ENCODE measurements at regions of chr12 and their contacts with region 1.

Region 1: DNA sequence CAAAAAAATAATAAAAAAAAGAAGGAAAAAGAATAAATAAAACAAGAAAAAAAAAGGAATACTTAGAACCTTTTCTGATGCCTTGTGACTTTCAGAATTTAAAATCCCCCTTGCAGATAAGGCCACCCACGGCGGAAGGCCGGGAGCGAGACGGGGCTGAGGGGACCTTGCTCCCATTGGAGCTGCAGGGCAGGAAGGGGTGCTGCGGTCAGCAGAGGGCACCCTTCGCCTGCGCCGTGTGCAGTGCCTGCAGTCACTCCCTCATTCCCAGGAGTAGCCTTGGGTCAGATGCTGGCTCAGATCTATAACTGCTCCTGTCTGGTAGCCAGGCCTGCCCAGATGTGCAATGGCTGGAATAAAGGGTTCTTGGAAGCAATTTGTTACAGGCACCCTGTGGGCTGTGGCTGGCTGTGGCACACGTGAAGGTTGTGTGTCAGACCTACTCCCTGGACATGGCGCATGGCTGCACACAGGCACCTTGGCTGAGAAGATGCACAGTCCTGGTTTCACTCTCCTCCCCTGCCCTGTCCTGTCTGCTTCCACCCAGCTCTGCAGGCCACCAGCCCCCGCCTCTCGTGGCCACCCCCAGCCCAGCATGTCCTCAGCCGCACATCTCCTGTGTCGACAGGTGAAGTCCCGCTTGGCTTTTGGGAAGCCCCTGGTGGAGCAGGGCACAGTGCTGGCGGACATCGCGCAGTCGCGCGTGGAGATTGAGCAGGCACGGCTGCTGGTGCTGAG is 13.4 kb upstream of the ALDH2 start:
- DNase-seq: peak in 1 of 2 donors; percentile 61
- ATAC-seq: peak; percentile 65 to 76
- H3K4me3 ChIP-seq: no peak overlapping the region
- H3K27ac ChIP-seq: peak overlapping the region in 3 of 4 donors; percentile 14 to 60 (median 28)
- H3K4me1 ChIP-seq: peaks cover 24 to 27% of the 10 kb centered on the region in 2 donors
- H3K27me3 ChIP-seq: no peaks in the 10 kb centered on the region
- CTCF ChIP-seq: peak; percentile 69 to 90 (median 80)
- POLR2A ChIP-seq: no peak

Region 2: GRCh38 chr12:111766608-111767361 is 13.5 kb after region 1 on chr12 and contains the start of gene ALDH2:
- in situ Hi-C with region 1: no loop called
- intact Hi-C with region 1: no loop called
- DNase-seq: peak; percentile 45 to 55
- ATAC-seq: peak; percentile 82 to 84
- H3K4me3 ChIP-seq: peak within 1 kb of the TSS; percentile 85 to 95 (median 92)
- H3K27ac ChIP-seq: peak within 1 kb of the TSS; percentile 81 to 87 (median 84)
- H3K4me1 ChIP-seq: peaks cover 6 to 24% of the 10 kb centered on the region in 2 donors
- H3K27me3 ChIP-seq: no peaks in the 10 kb centered on the region
- CTCF ChIP-seq: no peak
- POLR2A ChIP-seq: peak; percentile 69 to 85
- total RNA-seq, gene ALDH2: 70.9 to 156 (median 89.9) TPM

Region 3: DNA sequence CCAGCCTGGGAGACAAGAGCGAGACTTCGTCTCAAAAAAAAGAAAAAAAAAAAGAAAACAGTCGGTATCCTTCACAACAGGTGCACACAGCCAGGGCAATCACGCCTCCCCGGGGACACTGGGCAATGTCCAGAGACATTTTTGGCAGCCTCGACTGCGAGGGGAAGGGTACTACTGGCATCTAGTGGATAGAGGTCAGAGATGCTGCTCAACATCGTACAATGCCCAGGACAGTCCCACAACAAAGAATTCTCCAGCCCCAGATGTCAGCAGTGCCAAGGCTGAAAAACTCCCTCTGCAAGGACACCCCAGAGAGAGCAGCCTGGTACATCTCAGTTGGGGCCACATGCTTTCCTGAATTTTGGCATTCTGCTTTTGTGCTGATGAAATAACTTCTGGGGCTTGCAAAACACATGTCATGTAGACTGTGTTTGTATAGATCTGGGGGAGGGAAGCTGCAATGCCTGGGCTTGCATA is 34.9 kb after region 1 on chr12:
- in situ Hi-C with region 1: loop called in 1 of 4 experiments (anchors 5 kb)
- intact Hi-C with region 1: loop called (anchors 1 kb)
- DNase-seq: peak; percentile 47 to 71
- ATAC-seq: peak; percentile 77 to 85
- H3K4me3 ChIP-seq: no peak overlapping the region
- H3K27ac ChIP-seq: peak overlapping the region; percentile 21 to 40 (median 38)
- H3K4me1 ChIP-seq: peaks cover 2 to 16% of the 10 kb centered on the region in 2 donors
- H3K27me3 ChIP-seq: no peaks in the 10 kb centered on the region
- CTCF ChIP-seq: peak; percentile 51 to 68 (median 58)
- POLR2A ChIP-seq: no peak

Region 4: DNA sequence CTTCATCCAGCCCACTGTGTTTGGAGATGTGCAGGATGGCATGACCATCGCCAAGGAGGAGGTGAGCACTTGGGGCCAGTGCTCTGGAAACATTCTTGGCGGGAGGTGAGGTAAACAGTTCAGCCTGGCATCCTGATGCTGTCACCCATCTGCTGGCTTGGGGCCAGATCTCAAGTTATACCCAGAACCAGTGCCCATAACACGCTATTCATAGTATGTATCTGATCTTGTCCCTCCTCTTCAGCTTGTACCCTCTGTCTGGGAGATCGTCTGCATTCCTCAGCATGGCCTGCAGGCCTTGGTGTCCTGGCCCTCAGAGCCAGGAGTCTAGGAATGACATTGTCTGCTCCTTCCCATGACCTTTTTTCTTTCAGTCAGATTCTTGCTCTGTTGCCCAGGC is 44.9 kb after region 1 on chr12:
- in situ Hi-C with region 1: loop called in 1 of 4 experiments (anchors 5 kb)
- intact Hi-C with region 1: no loop called
- DNase-seq: no peak
- ATAC-seq: no peak
- H3K4me3 ChIP-seq: no peak overlapping the region
- H3K27ac ChIP-seq: peak overlapping the region in 2 of 4 donors; percentile 27 to 36
- H3K4me1 ChIP-seq: no peaks in the 10 kb centered on the region
- H3K27me3 ChIP-seq: no peaks in the 10 kb centered on the region
- CTCF ChIP-seq: no peak
- POLR2A ChIP-seq: no peak

Region 5: GRCh38 chr12:111812881-111813741 is 59.8 kb after region 1 on chr12:
- in situ Hi-C with region 1: loop called in 2 of 4 experiments (anchors 5 kb)
- intact Hi-C with region 1: loop called (anchors 1 kb)
- DNase-seq: peak; percentile 56 to 78
- ATAC-seq: peak; percentile 90 to 99
- H3K4me3 ChIP-seq: no peak overlapping the region
- H3K27ac ChIP-seq: no peak overlapping the region
- H3K4me1 ChIP-seq: no peaks in the 10 kb centered on the region
- H3K27me3 ChIP-seq: no peaks in the 10 kb centered on the region
- CTCF ChIP-seq: peak; percentile 75 to 89 (median 83)
- POLR2A ChIP-seq: no peak

Region 6: DNA sequence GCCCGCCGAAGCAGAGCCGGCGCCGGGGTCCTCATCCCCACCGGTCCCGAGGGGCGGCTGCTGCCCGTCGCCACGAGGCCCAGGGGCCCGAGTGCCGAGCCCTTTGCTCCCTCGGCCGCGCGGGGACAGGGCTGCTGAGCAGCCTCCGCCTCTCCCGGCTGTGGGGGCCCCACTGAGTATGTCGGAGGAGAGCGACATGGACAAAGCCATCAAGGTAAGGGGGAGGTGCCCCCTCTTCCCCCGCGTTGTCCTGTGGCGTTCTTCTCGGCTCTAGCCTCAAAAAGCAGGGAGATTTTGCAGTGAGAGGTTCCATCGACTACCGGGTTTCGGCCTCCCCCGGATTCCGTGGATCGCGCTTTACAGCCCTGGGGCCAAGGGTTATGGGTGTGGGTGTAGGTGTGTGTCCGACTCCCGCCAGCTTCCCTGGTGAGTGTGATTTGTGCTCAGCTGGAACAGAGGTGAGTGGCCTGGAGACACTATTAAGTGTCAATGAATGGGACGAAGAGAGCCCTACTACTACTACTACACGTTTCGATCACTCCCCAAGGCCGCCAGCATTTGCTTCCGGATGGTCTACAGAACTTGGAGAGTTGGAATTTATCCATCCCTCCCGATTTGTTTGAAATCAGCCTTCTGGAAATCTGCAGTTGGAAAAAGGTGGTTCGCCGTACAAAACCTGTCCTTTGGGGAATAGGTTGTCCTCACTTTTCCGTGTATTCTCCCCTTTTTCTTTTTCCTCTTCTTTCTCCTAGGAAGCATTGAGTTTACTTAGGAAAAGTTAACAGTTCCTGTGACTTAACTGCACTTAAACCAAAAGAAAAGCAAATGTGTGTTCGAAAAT is 89.5 kb after region 1 on chr12:
- in situ Hi-C with region 1: no loop called
- intact Hi-C with region 1: no loop called
- DNase-seq: no peak
- ATAC-seq: peak; percentile 10
- H3K4me3 ChIP-seq: peak overlapping the region; percentile 54 to 93 (median 84)
- H3K27ac ChIP-seq: peak overlapping the region; percentile 82 to 96 (median 90)
- H3K4me1 ChIP-seq: peaks cover 35 to 41% of the 10 kb centered on the region in 2 donors
- H3K27me3 ChIP-seq: no peaks in the 10 kb centered on the region
- CTCF ChIP-seq: no peak
- POLR2A ChIP-seq: no peak

Measured in gastrocnemius medialis (tissue), 4 donors.